ENCODE measurements at regions of chr2 and their contacts with region 1.

Region 1: DNA sequence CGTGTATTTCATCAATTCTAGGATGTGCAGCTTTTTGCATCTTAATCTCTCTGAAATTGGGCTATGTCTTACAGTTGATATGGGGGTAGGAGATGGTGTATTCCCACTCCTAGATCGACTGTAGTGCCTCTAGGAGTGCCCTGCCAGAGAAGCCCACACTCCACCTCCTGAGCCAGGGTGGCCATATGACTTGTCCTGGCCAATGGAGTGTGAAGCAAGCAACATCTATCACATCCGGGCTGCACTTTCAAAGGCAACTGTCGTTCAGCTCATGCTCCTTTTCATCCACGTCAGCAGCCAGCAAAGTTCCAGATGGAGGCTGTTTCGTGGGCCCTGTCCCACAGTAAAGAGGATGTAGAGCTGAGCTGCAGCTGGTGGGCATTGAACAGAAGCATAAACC is 149.4 kb upstream of the SLC1A4 start:
- DNase-seq: no peak
- ATAC-seq: peak; percentile 90
- H3K4me3 ChIP-seq: no peak overlapping the region
- H3K27ac ChIP-seq: peak overlapping the region; percentile 45
- H3K4me1 ChIP-seq: peaks cover 24% of the 10 kb centered on the region
- H3K27me3 ChIP-seq: no peaks in the 10 kb centered on the region
- CTCF ChIP-seq: no peak
- EP300 ChIP-seq: no peak
- POLR2A ChIP-seq: peak; percentile 68
- RAD21 ChIP-seq: no peak

Region 2: DNA sequence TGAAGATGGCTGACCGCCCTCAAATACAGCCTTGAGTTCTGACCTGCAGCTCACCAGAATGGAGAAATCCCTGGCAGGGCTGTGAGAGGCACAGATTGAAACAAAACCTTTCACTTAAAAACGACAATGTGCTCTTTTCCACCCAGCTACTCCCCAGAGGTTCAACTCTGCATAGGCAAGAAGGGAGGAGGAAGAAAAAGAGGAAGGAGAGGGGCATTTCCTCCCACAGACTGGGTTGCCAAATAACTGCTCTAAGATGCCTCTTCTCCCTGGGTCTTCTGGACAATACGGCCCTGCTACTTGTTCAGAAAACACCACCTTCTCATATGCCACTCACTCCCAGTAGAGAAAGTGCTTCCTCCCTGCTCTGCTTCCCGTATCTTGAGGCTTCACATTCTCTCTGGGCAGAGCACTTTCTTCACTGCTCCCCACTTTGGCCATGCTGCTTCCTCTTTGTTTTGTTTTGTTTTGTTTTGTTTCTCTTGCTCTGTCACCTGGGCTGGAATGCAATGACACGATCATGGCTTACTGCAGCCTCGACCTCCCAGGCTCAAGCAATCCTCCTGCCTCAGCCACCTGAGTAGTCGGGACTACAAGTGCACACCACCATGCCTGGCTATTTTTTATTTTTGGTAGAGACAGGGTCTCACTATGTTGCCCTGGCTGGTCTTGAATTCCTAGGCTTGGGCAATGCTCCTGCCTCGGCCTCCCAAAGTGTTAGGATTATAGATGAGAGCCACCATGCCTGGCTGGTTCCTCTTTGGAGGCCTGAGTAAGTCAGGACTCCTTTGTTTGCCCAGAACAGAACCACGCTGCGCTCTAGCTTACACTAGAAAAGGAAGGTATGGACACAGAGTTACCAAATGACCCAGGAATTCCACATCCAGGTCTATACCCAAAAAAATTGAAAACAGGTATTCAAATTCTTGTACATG is 13.2 kb after region 1 on chr2:
- CTCF ChIA-PET with region 1: interaction called, 14 read pairs
- POLR2A ChIA-PET with region 1: interaction called, 4 read pairs
- RAD21 ChIA-PET with region 1: interaction called, 3 read pairs
- SMC1A ChIA-PET with region 1: interaction called, 21 read pairs
- in situ Hi-C with region 1: no loop called
- intact Hi-C with region 1: no loop called
- DNase-seq: no peak
- ATAC-seq: peak; percentile 50
- H3K4me3 ChIP-seq: no peak overlapping the region
- H3K27ac ChIP-seq: no peak overlapping the region; the same call in 1 of the 2 replicates
- H3K4me1 ChIP-seq: peaks cover 8% of the 10 kb centered on the region
- H3K27me3 ChIP-seq: no peaks in the 10 kb centered on the region
- CTCF ChIP-seq: no peak
- EP300 ChIP-seq: no peak
- POLR2A ChIP-seq: no peak
- RAD21 ChIP-seq: no peak

Region 3: DNA sequence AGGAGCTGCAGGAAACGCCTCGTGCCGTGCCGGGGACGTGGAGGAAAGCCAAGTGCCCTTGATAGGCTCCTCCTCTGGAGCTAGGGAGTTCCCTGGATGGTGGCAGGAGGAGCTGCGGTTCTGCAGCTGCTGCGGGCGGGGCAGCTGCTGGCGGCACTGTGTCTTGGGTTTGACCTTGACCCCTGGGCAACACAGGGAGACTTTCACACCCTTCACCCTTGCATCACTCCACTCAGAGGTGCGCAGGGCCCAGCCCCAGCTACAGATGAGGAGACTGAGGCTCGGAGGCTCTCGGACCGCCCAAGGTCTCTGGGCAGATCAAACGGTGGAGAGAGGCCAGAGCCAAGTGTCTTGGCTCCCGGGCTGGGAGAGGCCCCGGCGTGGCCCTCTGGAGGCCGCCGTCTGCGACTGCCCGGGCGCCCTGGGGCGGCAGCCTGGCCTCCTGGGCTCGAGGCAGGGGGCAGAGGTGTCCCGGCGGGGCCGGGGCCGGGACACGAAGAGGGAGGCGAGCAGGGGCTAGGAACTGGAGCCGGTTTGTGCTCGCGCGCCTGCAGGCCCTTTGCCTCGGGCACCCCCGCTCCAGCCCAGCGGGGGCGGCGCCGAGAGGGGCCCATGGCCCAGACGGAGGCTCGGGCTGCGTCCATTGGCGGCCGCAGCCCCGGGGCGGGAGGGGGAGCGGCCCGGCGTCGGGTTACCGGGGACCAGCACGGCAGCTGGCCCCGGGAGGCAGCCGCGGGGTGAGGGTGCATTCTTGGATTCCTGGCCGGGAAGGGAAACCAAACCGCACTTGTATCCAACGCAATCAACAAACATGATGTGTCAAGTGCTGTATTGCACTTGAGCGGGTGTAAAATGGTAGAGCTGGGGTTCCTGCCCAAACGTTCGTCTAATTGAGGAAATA is 19.7 kb after region 1 on chr2:
- CTCF ChIA-PET with region 1: interaction called, 3 read pairs
- POLR2A ChIA-PET with region 1: interaction called, 3 read pairs
- RAD21 ChIA-PET with region 1: interaction called, 10 read pairs
- SMC1A ChIA-PET with region 1: interaction called, 22 read pairs
- in situ Hi-C with region 1: no loop called
- intact Hi-C with region 1: no loop called
- DNase-seq: no peak
- ATAC-seq: peak; percentile 53
- H3K4me3 ChIP-seq: peak overlapping the region; percentile 65
- H3K27ac ChIP-seq: peak overlapping the region; percentile 91
- H3K4me1 ChIP-seq: peaks cover 54% of the 10 kb centered on the region
- H3K27me3 ChIP-seq: no peaks in the 10 kb centered on the region
- CTCF ChIP-seq: no peak
- EP300 ChIP-seq: no peak
- POLR2A ChIP-seq: peak; percentile 40
- RAD21 ChIP-seq: no peak

Measured in GM12878 (cell line).